ENCODE measurements at regions of chr10 and their contacts with region 1.

Region 1: GRCh38 chr10:73233883-73234282 is 13.2 kb downstream of the DNAJC9 start:
- DNase-seq: no peak
- ATAC-seq: no peak
- H3K4me3 ChIP-seq: no peak overlapping the region
- H3K27ac ChIP-seq: no peak overlapping the region
- H3K4me1 ChIP-seq: no peaks in the 10 kb centered on the region
- H3K27me3 ChIP-seq: no peaks in the 10 kb centered on the region
- CTCF ChIP-seq: no peak

Region 2: GRCh38 chr10:73182568-73182967 is 51.3 kb before region 1 on chr10:
- CTCF ChIA-PET with region 1: no interaction called
- POLR2A ChIA-PET with region 1: no interaction called
- in situ Hi-C with region 1: no loop called
- intact Hi-C with region 1: no loop called
- DNase-seq: no peak
- ATAC-seq: no peak
- H3K4me3 ChIP-seq: no peak overlapping the region
- H3K27ac ChIP-seq: no peak overlapping the region
- H3K4me1 ChIP-seq: no peaks in the 10 kb centered on the region
- H3K27me3 ChIP-seq: no peaks in the 10 kb centered on the region
- CTCF ChIP-seq: no peak

Region 3: GRCh38 chr10:73252445-73253224 is 18.8 kb after region 1 on chr10 and contains the start of gene MRPS16:
- CTCF ChIA-PET with region 1: no interaction called
- POLR2A ChIA-PET with region 1: interaction called, 12 read pairs
- in situ Hi-C with region 1: no loop called
- intact Hi-C with region 1: no loop called
- DNase-seq: peak; percentile 88
- ATAC-seq: peak; percentile 95
- H3K4me3 ChIP-seq: peak within 1 kb of the TSS; percentile 96 to 100
- H3K27ac ChIP-seq: peak within 1 kb of the TSS; percentile 99
- H3K4me1 ChIP-seq: peaks cover 31% of the 10 kb centered on the region
- H3K27me3 ChIP-seq: no peaks in the 10 kb centered on the region
- CTCF ChIP-seq: no peak
- total RNA-seq, gene MRPS16: 199 TPM